ENCODE measurements at regions of chr14 and their contacts with region 1.

Region 1: DNA sequence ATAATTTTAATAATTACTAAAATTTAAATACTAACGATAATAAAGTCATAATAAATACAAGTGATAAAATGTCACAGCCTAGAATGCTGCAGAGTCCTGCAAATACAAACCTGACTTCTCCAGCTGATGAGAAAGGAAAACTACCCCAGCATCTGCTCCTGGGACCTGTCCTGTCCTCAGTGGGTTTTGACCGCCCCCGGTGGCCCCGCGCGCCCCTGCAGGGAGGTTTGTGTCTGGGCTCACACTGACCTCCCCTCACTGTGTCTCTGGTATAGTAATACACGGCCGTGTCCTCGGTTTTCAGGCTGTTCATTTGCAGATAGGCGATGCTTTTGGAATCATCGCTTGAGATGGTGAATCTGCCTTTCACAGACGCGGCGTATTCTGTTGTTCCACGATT is 1139.4 kb downstream of the TMEM121 start:
- DNase-seq: no peak
- H3K4me3 Mint-ChIP-seq: no peak overlapping the region
- H3K27ac Mint-ChIP-seq: no peak overlapping the region
- H3K4me1 Mint-ChIP-seq: peaks cover 6% of the 10 kb centered on the region
- H3K27me3 Mint-ChIP-seq: peaks cover 52% of the 10 kb centered on the region

Region 2: DNA sequence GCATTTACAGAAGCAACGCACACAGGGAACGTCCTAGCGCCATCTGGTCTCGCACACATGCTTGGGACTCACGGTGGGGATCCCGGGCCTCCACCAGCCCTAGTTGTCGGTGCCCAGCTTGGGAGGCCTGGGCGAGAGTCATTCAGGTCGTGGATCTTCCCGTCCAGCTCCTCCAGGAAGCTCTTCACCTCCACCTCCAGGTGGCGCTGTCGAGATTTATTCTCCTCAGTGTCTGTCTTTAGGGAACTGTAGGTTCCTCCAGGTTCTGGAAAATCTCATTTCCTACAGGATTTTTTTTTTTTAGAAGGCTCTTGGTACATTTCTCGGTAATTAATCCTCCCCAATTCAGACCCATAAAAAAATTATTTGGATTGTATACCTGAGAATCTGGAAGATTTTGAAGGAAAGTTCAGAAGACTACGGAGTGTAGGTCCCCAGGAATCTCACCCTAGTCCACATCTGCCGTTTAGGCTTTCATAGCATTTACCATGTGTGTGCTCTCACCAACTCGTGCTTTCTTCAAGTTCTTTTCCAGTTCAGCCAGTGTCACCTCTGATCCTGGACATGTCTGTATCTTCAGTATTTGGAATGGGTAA is 229.4 kb before region 1 on chr14:
- CTCF ChIA-PET with region 1: no interaction called
- POLR2A ChIA-PET with region 1: no interaction called
- DNase-seq: peak; percentile 56
- H3K4me3 Mint-ChIP-seq: no peak overlapping the region
- H3K27ac Mint-ChIP-seq: no peak overlapping the region
- H3K4me1 Mint-ChIP-seq: no peaks in the 10 kb centered on the region
- H3K27me3 Mint-ChIP-seq: peaks cover 48% of the 10 kb centered on the region

Region 3: DNA sequence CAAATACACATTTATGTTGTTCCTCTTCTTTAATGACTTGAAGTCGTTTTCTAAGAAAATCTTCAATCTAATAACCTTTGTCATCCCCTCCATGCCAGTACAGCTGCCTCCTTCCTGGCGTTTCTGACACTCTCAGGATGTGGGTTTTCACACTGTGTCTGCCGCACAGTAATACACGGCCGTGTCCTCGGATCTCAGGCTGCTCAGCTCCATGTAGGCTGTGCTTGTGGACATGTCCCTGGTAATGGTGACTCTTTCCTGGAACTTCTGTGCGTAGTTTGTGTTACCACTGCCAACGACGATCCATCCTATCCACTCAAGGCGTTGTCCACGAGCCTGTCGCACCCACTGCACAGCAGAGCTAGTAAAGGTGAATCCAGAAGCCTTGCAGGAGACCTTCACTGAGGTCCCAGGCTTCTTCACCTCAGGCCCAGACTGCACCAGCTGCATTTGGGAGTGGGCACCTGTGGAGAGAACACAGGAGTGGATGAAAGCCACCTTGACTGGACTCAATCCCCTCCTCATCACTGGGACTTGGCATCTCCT is 43.5 kb before region 1 on chr14:
- CTCF ChIA-PET with region 1: interaction called, 14 read pairs
- POLR2A ChIA-PET with region 1: no interaction called
- DNase-seq: peak; percentile 68
- H3K4me3 Mint-ChIP-seq: no peak overlapping the region
- H3K27ac Mint-ChIP-seq: no peak overlapping the region
- H3K4me1 Mint-ChIP-seq: peaks cover 25% of the 10 kb centered on the region
- H3K27me3 Mint-ChIP-seq: peaks cover 55% of the 10 kb centered on the region

Region 4: GRCh38 chr14:106681568-106681967 is 15.8 kb after region 1 on chr14:
- CTCF ChIA-PET with region 1: interaction called, 18 read pairs
- POLR2A ChIA-PET with region 1: no interaction called
- DNase-seq: no peak
- H3K4me3 Mint-ChIP-seq: no peak overlapping the region
- H3K27ac Mint-ChIP-seq: no peak overlapping the region
- H3K4me1 Mint-ChIP-seq: no peaks in the 10 kb centered on the region
- H3K27me3 Mint-ChIP-seq: peaks cover 52% of the 10 kb centered on the region

Region 5: GRCh38 chr14:106691601-106692291 is 25.9 kb after region 1 on chr14:
- CTCF ChIA-PET with region 1: interaction called, 16 read pairs
- POLR2A ChIA-PET with region 1: no interaction called
- DNase-seq: peak; percentile 83
- H3K4me3 Mint-ChIP-seq: no peak overlapping the region
- H3K27ac Mint-ChIP-seq: no peak overlapping the region
- H3K4me1 Mint-ChIP-seq: peaks cover 4% of the 10 kb centered on the region
- H3K27me3 Mint-ChIP-seq: peaks cover 16% of the 10 kb centered on the region

Region 6: GRCh38 chr14:106790189-106791036 is 124.6 kb after region 1 on chr14:
- CTCF ChIA-PET with region 1: interaction called, 16 read pairs
- POLR2A ChIA-PET with region 1: no interaction called
- DNase-seq: peak; percentile 78
- H3K4me3 Mint-ChIP-seq: no peak overlapping the region
- H3K27ac Mint-ChIP-seq: no peak overlapping the region
- H3K4me1 Mint-ChIP-seq: peaks cover 11% of the 10 kb centered on the region
- H3K27me3 Mint-ChIP-seq: peaks cover 39% of the 10 kb centered on the region

Region 7: GRCh38 chr14:106823552-106823951 is 157.7 kb after region 1 on chr14:
- CTCF ChIA-PET with region 1: interaction called, 11 read pairs
- POLR2A ChIA-PET with region 1: no interaction called
- DNase-seq: no peak
- H3K4me3 Mint-ChIP-seq: no peak overlapping the region
- H3K27ac Mint-ChIP-seq: no peak overlapping the region
- H3K4me1 Mint-ChIP-seq: peaks cover 4% of the 10 kb centered on the region
- H3K27me3 Mint-ChIP-seq: peaks cover 36% of the 10 kb centered on the region

Measured in activated CD4-positive, alpha-beta memory T cell treated with anti-CD3 and anti-CD28 coated beads, Interleukin-2, amount 10 ng/mL, durations not matched to agents 7 days and 5 days (primary cell).